ENCODE measurements at regions of chr15 and their contacts with region 1.

Region 1: DNA sequence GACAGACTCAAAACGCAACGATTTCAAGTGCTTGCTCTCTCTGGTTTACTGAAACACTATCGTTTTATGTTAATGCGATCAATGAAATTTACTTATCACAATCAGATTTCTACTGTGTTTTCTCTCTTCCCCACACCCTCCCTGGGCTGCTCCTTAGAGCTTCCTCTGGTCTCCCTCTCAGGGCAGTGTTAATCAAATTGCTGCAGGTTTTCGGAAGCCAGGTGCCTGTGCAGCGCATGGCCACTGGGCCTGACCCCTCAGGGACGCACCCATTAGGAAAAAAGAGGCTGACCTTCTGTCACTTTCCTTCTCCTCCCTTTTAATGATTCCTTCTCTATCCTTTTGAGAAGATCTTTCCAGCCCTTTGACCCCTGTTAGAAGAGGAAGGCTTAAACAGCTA is 134.5 kb upstream of the ONECUT1 start:
- DNase-seq: no peak
- H3K4me3 ChIP-seq: no peak overlapping the region
- H3K27ac ChIP-seq: no peak overlapping the region
- H3K4me1 ChIP-seq: no peaks in the 10 kb centered on the region
- H3K27me3 ChIP-seq: no peaks in the 10 kb centered on the region
- CTCF ChIP-seq: no peak

Region 2: GRCh38 chr15:52862677-52863076 is 62.0 kb before region 1 on chr15:
- intact Hi-C with region 1: loop called (anchors 10 kb)
- DNase-seq: no peak
- H3K4me3 ChIP-seq: no peak overlapping the region
- H3K27ac ChIP-seq: no peak overlapping the region
- H3K4me1 ChIP-seq: no peaks in the 10 kb centered on the region
- H3K27me3 ChIP-seq: peaks cover 0 to 9% of the 10 kb centered on the region in 2 donors
- CTCF ChIP-seq: no peak

Region 3: GRCh38 chr15:52910518-52910917 is 14.1 kb before region 1 on chr15:
- intact Hi-C with region 1: no loop called
- DNase-seq: no peak
- H3K4me3 ChIP-seq: no peak overlapping the region
- H3K27ac ChIP-seq: no peak overlapping the region
- H3K4me1 ChIP-seq: no peaks in the 10 kb centered on the region
- H3K27me3 ChIP-seq: no peaks in the 10 kb centered on the region
- CTCF ChIP-seq: no peak

Region 4: GRCh38 chr15:53080484-53080883 is 155.9 kb after region 1 on chr15:
- intact Hi-C with region 1: no loop called
- DNase-seq: no peak
- H3K4me3 ChIP-seq: no peak overlapping the region
- H3K27ac ChIP-seq: no peak overlapping the region
- H3K4me1 ChIP-seq: no peaks in the 10 kb centered on the region
- H3K27me3 ChIP-seq: no peaks in the 10 kb centered on the region
- CTCF ChIP-seq: no peak

Measured in tibial artery (tissue), 4 donors.